ENCODE measurements at regions of chr1 and their contacts with region 1.

Region 1: DNA sequence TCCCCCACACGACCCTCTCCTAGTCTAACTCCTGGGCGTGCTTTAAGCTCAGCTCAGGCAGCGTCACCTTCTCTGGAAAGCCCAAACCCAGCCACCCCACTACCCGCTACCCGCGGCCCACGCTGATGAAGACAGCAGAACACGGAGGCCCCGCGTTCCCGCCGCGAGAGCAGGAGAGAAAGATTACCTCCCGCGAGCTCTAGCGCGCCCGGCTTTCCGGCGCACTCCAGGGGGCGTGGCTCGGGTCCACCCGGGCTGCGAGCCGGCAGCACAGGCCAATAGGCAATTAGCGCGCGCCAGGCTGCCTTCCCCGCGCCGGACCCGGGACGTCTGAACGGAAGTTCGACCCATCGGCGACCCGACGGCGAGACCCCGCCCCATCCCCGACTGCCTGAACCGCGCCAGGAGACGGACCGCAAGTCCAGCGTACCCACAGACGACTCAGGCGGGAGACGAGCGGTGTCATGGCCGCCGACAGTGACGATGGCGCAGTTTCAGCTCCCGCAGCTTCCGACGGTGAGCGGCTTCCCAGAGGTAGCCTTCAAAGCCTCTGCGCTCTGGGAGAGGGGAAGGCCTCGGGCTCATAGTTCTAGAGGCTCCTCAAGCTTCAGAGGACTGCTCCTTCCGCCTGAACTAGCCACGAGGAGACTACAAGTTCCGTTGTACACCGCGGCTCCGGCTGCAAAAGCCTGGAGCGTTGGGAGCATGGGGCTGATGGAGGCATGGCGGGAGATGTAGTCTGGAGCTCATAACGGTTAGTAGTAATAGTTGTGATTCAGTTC is at the starts of genes MUTYH and TOE1:
- DNase-seq: peak; percentile 95
- H3K4me3 ChIP-seq: peak within 1 kb of the TSS; percentile 81
- H3K27ac ChIP-seq: peak within 1 kb of the TSS; percentile 85
- H3K4me1 ChIP-seq: peaks cover 28% of the 10 kb centered on the region
- CTCF ChIP-seq: no peak
- total RNA-seq, gene MUTYH: 46.6 and 52.6 TPM in 2 replicates
- total RNA-seq, gene TOE1: 23.7 and 30.2 TPM in 2 replicates

Region 2: DNA sequence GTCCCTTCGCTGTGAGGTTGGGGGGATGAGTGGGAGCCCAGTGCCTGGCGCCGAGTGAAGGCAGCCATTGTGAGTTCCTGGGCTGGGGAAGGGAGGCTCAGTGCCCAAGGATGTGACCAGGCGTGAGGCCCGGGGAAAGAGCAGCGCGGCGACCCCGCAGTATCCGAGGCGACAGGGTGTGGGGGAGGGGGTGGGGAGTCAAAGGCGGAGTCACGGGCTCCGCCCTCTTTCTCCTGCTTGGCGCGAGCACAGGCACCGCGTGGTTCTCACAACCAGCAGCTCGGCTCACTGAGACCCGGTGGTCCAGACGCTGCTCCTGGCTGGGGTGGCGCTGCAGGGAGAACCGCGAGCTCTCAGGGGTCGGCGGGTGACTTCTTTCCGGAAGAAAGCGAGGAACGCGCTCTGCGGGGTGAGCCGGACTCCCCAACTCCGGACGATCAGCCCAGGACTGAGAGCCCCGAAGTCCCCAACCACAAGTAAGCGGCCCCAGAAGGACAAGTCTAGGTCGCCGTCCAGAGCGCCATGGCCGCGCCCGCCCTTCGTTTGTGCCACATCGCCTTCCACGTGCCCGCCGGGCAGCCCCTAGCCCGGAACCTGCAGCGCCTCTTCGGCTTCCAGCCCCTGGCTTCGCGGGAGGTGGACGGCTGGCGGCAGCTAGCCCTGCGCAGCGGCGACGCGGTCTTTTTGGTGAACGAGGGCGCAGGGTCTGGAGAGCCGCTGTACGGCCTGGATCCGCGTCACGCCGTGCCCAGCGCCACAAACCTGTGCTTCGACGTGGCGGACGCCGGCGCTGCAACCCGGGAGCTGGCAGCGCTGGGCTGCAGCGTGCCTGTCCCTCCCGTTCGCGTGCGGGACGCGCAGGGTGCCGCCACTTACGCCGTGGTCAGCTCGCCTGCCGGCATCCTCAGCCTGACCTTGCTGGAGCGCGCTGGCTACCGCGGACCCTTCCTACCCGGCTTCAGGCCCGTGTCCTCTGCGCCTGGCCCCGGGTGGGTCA is 13.1 kb before region 1 on chr1 and contains the start of gene HPDL:
- CTCF ChIA-PET with region 1: no interaction called
- POLR2A ChIA-PET with region 1: interaction called, 45 read pairs
- intact Hi-C with region 1: loop called (anchors 1 kb)
- DNase-seq: peak; percentile 84
- H3K4me3 ChIP-seq: peak within 1 kb of the TSS; percentile 71
- H3K27ac ChIP-seq: peak within 1 kb of the TSS; percentile 57
- H3K4me1 ChIP-seq: peaks cover 34% of the 10 kb centered on the region
- CTCF ChIP-seq: peak; percentile 43; the same call in 1 of the 2 replicates
- total RNA-seq, gene HPDL: 25.2 and 27.1 TPM in 2 replicates

Region 3: GRCh38 chr1:45490626-45491486 is 150.9 kb after region 1 on chr1 and contains the start of gene TESK2:
- CTCF ChIA-PET with region 1: interaction called, 6 read pairs
- POLR2A ChIA-PET with region 1: interaction called, 20 read pairs
- intact Hi-C with region 1: loop called (anchors 5 kb)
- DNase-seq: peak; percentile 100
- H3K4me3 ChIP-seq: peak within 1 kb of the TSS; percentile 75
- H3K27ac ChIP-seq: peak within 1 kb of the TSS; percentile 15
- H3K4me1 ChIP-seq: peaks cover 32% of the 10 kb centered on the region
- CTCF ChIP-seq: no peak
- total RNA-seq, gene TESK2: 4.9 and 5.0 TPM in 2 replicates

Region 4: GRCh38 chr1:45499415-45499769 is 159.4 kb after region 1 on chr1:
- CTCF ChIA-PET with region 1: interaction called, 8 read pairs
- POLR2A ChIA-PET with region 1: interaction called, 22 read pairs
- intact Hi-C with region 1: loop called (anchors 5 kb)
- DNase-seq: peak; percentile 59
- H3K4me3 ChIP-seq: peak overlapping the region; percentile 86
- H3K27ac ChIP-seq: peak overlapping the region; percentile 54
- H3K4me1 ChIP-seq: peaks cover 21% of the 10 kb centered on the region
- CTCF ChIP-seq: no peak

Region 5: GRCh38 chr1:45583264-45583665 is 243.3 kb after region 1 on chr1:
- CTCF ChIA-PET with region 1: no interaction called
- POLR2A ChIA-PET with region 1: interaction called, 8 read pairs
- intact Hi-C with region 1: loop called (anchors 1 kb)
- DNase-seq: peak; percentile 98
- H3K4me3 ChIP-seq: peak overlapping the region; percentile 99
- H3K27ac ChIP-seq: peak overlapping the region; percentile 83
- H3K4me1 ChIP-seq: peaks cover 54% of the 10 kb centered on the region
- CTCF ChIP-seq: no peak